Heart right ventricle (tissue), 16 donors: ENCODE measurements at regions of chr16 and their contacts with region 1.

Region 1: GRCh38 chr16:27611340-27611739 is 61.4 kb downstream of the KATNIP start:
- DNase-seq: no peak
- ATAC-seq: no peak
- H3K4me3 ChIP-seq: no peak overlapping the region
- H3K27ac ChIP-seq: no peak overlapping the region
- H3K4me1 ChIP-seq: no peaks in the 10 kb centered on the region
- H3K27me3 ChIP-seq: no peaks in the 10 kb centered on the region
- CTCF ChIP-seq: no peak

Region 2: GRCh38 chr16:27625050-27625697 is 13.8 kb after region 1 on chr16:
- intact Hi-C with region 1: loop called in 1 of 10 experiments (anchors 2 kb)
- DNase-seq: peak; percentile 10 to 18
- ATAC-seq: peak in 7 of 8 donors; percentile 61 to 92 (median 72)
- H3K4me3 ChIP-seq: no peak overlapping the region
- H3K27ac ChIP-seq: peak overlapping the region in 6 of 10 donors; percentile 48 to 77 (median 64)
- H3K4me1 ChIP-seq: peaks cover 0 to 23% (median 7%) of the 10 kb centered on the region in 9 donors
- H3K27me3 ChIP-seq: no peaks in the 10 kb centered on the region
- CTCF ChIP-seq: no peak

Region 3: GRCh38 chr16:27660507-27660906 is 49.2 kb after region 1 on chr16:
- intact Hi-C with region 1: no loop called
- DNase-seq: no peak
- ATAC-seq: no peak
- H3K4me3 ChIP-seq: no peak overlapping the region
- H3K27ac ChIP-seq: no peak overlapping the region
- H3K4me1 ChIP-seq: no peaks in the 10 kb centered on the region
- H3K27me3 ChIP-seq: no peaks in the 10 kb centered on the region
- CTCF ChIP-seq: no peak